MCF 10A (cell line): ENCODE measurements at regions of chr18 and their contacts with region 1.

Region 1: GRCh38 chr18:63016270-63016669 is 300.9 kb downstream of the PHLPP1 start:
- DNase-seq: peak; percentile 68
- H3K4me3 Mint-ChIP-seq: no peak overlapping the region
- H3K27ac Mint-ChIP-seq: no peak overlapping the region
- H3K4me1 Mint-ChIP-seq: no peaks in the 10 kb centered on the region
- H3K27me3 Mint-ChIP-seq: peaks cover 24% of the 10 kb centered on the region
- CTCF ChIP-seq: peak; percentile 76

Region 2: GRCh38 chr18:63040788-63041410 is 24.6 kb after region 1 on chr18:
- CTCF ChIA-PET with region 1: interaction called, 10 read pairs
- POLR2A ChIA-PET with region 1: interaction called, 4 read pairs
- intact Hi-C with region 1: no loop called
- DNase-seq: no peak
- H3K4me3 Mint-ChIP-seq: no peak overlapping the region
- H3K27ac Mint-ChIP-seq: no peak overlapping the region
- H3K4me1 Mint-ChIP-seq: peaks cover 14% of the 10 kb centered on the region
- H3K27me3 Mint-ChIP-seq: no peaks in the 10 kb centered on the region
- CTCF ChIP-seq: no peak

Region 3: DNA sequence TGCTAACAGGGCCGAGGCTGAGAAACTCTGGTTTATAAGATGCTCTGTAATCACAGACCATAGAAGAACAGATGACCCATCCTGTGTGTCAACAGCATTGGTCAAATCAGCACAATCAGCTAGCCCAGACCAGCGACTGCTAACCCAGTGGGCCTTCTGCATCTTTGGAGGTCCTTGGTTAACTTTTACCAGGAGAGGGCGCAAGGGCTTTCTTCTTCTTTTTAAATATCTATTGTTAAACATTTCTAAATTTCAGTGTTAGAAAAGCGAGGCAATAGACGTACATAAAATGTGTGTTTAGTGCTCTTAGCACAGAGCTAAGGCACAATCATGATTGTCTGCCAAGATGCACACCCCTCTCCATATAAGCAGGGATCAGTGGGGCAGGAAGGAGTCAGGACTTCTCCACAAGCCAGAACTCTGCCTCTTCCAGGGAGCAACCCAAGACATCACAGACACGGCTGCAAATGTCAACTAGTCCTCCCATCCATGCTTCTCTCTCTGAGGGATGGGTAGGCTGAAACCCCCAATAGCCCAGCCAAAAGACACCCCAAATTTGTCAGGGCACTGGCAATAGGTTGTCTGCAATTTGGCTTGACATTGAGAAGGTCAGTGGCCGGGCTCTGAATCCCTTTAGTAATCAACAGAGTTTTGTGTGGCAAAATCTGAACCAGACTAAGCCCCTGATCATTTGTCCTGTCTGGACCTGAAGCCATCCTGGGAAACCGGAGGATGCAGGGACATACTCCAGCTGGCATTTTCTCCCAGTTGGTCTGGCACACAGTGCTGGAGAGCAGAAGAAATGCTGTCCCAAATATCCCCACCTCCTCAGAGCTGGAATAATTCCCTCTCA is 115.1 kb after region 1 on chr18:
- CTCF ChIA-PET with region 1: interaction called, 34 read pairs
- POLR2A ChIA-PET with region 1: no interaction called
- intact Hi-C with region 1: loop called (anchors 1 kb)
- DNase-seq: peak; percentile 65
- H3K4me3 Mint-ChIP-seq: no peak overlapping the region
- H3K27ac Mint-ChIP-seq: no peak overlapping the region
- H3K4me1 Mint-ChIP-seq: no peaks in the 10 kb centered on the region
- H3K27me3 Mint-ChIP-seq: peaks cover 7% of the 10 kb centered on the region
- CTCF ChIP-seq: peak; percentile 52

Region 4: GRCh38 chr18:63320046-63320689 is 303.9 kb after region 1 on chr18:
- CTCF ChIA-PET with region 1: interaction called, 100 read pairs
- POLR2A ChIA-PET with region 1: interaction called, 17 read pairs
- intact Hi-C with region 1: loop called (anchors 1 kb)
- DNase-seq: peak; percentile 83
- H3K4me3 Mint-ChIP-seq: peak overlapping the region; percentile 96
- H3K27ac Mint-ChIP-seq: no peak overlapping the region
- H3K4me1 Mint-ChIP-seq: peaks cover 23% of the 10 kb centered on the region
- H3K27me3 Mint-ChIP-seq: no peaks in the 10 kb centered on the region
- CTCF ChIP-seq: no peak

Region 5: DNA sequence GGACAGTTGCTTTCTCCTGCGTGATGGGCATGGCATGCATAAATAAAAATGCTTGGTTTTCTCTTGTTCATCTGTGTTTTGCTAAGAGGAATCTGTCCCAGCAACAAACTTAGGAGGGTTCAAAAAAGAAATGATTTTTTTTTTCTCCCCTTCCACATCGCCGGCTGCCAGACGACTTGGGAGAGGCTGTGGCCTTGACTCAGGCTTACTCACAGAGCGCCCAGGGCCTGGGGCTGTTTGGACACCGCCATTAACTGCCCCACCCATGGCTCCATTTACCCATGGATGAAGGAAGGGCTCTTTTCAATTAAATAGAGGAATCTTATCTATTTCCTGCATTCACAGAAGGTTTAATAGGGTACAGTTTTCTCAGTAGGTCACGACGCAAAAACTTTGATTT is 438.2 kb after region 1 on chr18:
- CTCF ChIA-PET with region 1: no interaction called
- POLR2A ChIA-PET with region 1: no interaction called
- intact Hi-C with region 1: no loop called
- DNase-seq: peak; percentile 86
- H3K4me3 Mint-ChIP-seq: peak overlapping the region; percentile 17
- H3K27ac Mint-ChIP-seq: peak overlapping the region; percentile 89
- H3K4me1 Mint-ChIP-seq: peaks cover 45% of the 10 kb centered on the region
- H3K27me3 Mint-ChIP-seq: no peaks in the 10 kb centered on the region
- CTCF ChIP-seq: no peak

Region 6: GRCh38 chr18:63505566-63506335 is 489.5 kb after region 1 on chr18:
- CTCF ChIA-PET with region 1: no interaction called
- POLR2A ChIA-PET with region 1: no interaction called
- intact Hi-C with region 1: loop called (anchors 1 kb)
- DNase-seq: peak; percentile 72
- H3K4me3 Mint-ChIP-seq: no peak overlapping the region
- H3K27ac Mint-ChIP-seq: peak overlapping the region; percentile 77
- H3K4me1 Mint-ChIP-seq: peaks cover 6% of the 10 kb centered on the region
- H3K27me3 Mint-ChIP-seq: no peaks in the 10 kb centered on the region
- CTCF ChIP-seq: peak; percentile 67

Region 7: DNA sequence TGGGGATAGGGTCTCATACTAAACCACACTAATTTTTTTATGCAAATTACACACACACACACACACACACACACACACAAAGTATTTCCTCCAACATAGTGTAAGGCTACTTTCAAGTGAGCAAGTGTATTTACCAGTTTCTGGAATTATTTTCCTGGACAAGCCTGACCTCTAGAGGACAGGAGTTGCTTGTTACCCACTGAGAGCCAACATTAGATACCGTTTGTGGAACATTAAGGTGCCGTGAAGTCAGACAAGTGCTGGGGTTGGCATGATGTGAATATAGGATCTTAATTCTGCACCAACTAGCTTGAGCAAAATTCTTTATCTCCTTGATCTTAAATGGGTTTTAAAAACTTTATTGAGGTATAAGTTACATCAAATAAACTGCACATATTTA is 831.9 kb after region 1 on chr18:
- CTCF ChIA-PET with region 1: no interaction called
- POLR2A ChIA-PET with region 1: no interaction called
- intact Hi-C with region 1: loop called (anchors 2 kb)
- DNase-seq: peak; percentile 73
- H3K4me3 Mint-ChIP-seq: no peak overlapping the region
- H3K27ac Mint-ChIP-seq: no peak overlapping the region
- H3K4me1 Mint-ChIP-seq: no peaks in the 10 kb centered on the region
- H3K27me3 Mint-ChIP-seq: no peaks in the 10 kb centered on the region
- CTCF ChIP-seq: peak; percentile 64